Prostate gland (tissue), 2 donors: ENCODE measurements at regions of chr9 and their contacts with region 1.

Region 1: DNA sequence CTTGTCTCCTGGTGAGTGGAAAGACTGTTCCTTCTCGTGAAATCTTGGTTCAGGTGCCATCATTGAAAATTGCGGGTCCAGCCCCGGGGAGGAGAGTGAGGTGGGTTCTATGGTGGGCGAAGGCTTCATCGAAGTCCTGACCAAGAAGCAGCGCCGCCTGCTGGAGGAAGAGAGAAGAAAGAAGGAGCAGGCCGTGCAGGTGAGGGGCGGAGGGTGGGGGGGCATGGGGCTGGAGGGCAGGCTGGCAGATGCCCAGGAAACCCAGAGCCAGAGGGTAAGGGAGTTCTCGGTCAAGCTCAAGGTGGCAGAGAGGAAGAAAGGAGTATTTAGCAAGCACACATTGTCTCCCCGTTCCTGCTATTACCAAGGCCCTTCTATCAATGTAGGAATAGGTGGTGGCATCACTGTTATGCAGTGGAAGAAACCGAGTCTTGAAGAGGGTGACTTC is 24.3 kb upstream of the POMT1 start:
- DNase-seq: no peak
- H3K4me3 ChIP-seq: no peak overlapping the region
- H3K27ac ChIP-seq: no peak overlapping the region
- H3K4me1 ChIP-seq: peaks cover 17% of the 10 kb centered on the region
- H3K27me3 ChIP-seq: no peaks in the 10 kb centered on the region
- CTCF ChIP-seq: peak; percentile 39 to 63 (median 46)
- POLR2A ChIP-seq: no peak

Region 2: GRCh38 chr9:131349881-131350563 is 128.4 kb before region 1 on chr9:
- intact Hi-C with region 1: loop called (anchors 10 kb)
- DNase-seq: peak; percentile 91
- H3K4me3 ChIP-seq: peak overlapping the region; percentile 8 to 27
- H3K27ac ChIP-seq: peak overlapping the region in 1 of 2 donors; percentile 33
- H3K4me1 ChIP-seq: no peaks in the 10 kb centered on the region
- H3K27me3 ChIP-seq: no peaks in the 10 kb centered on the region
- CTCF ChIP-seq: peak; percentile 61 to 93 (median 88)
- POLR2A ChIP-seq: no peak

Region 3: DNA sequence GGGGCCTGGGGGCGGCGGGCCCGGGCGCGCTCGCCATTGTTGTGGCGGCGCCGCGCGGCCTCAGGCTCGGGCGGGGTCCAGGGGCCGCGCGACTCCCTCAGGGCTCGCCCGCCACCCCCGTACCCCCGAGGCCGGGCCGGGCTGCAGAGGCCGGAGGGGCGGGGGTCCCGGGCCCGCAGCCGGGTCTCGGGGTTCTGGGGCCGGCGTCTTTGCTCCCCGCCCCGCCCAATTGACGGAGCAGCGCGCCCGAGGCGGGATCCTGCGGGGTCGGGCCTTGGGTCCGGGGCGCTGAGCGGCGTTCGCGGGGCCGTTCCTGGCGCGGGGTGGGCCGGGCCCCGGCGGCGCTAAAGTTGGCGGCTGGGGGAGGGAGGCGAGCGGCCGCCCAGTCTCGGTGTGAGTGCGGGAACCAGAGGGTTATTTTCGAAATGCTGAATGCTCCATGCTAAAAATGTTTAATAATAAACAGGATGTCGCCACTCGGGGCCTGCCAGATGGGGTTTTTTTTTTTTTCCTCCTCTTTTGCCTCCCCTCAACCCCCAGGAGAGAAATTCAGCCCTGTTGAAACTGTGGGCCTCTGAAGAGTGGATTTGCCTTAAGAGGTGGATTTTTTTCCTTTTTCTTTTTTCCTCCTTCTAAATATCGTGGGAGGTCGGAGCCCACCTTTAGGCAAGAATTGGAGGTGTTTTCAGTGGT is 83.8 kb before region 1 on chr9:
- intact Hi-C with region 1: loop called (anchors 5 kb)
- DNase-seq: no peak
- H3K4me3 ChIP-seq: peak overlapping the region; percentile 75 to 79
- H3K27ac ChIP-seq: peak overlapping the region; percentile 94 to 97
- H3K4me1 ChIP-seq: peaks cover 28% of the 10 kb centered on the region
- H3K27me3 ChIP-seq: no peaks in the 10 kb centered on the region
- CTCF ChIP-seq: no peak
- POLR2A ChIP-seq: no peak

Region 4: DNA sequence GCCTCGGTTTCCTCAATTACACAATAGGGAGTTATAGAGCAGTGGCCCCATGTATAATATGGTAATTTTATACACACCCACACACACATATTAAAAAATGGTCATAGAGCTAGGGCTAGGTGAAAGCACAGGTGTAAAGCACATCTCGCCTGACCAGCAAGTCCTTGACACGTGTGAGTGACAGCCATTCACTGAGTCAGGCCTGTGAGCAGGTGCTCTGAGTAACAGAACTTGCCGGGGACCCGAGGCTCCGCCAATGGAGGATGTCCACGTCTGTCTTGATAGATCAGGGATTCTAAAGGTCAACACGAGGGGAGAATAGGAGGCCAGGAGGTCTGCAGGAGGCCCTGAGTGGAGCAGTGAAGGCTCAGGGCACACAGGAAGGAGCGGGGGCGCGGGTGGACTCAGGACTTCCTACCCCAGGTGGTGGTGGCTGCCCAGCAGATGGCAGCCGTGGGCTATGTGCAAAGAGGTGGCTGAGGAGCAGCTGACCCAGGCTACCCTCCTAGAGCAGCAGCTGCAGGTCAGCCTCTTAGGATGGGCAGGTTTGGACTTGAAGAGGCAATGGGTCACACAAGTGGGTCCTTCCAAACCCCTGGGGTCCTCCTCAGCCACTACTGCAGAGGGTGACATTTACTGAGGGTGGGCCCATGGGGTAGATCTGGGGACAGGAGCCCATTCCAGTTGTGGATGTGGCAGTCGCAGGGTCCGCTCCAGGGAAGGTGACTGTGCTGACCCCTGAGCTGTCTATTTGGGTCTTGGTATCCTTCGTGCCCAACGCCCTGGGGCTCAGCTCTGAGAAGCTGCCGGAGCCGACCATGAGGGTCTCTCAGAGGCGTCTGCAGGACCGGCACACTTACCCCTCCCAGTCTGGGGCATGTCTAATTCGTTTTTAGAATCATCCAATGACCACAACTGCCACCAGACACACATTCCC is 112.7 kb after region 1 on chr9:
- intact Hi-C with region 1: no loop called
- DNase-seq: peak; percentile 75
- H3K4me3 ChIP-seq: no peak overlapping the region
- H3K27ac ChIP-seq: no peak overlapping the region
- H3K4me1 ChIP-seq: no peaks in the 10 kb centered on the region
- H3K27me3 ChIP-seq: no peaks in the 10 kb centered on the region
- CTCF ChIP-seq: peak; percentile 59 to 96 (median 90)
- POLR2A ChIP-seq: no peak

Region 5: DNA sequence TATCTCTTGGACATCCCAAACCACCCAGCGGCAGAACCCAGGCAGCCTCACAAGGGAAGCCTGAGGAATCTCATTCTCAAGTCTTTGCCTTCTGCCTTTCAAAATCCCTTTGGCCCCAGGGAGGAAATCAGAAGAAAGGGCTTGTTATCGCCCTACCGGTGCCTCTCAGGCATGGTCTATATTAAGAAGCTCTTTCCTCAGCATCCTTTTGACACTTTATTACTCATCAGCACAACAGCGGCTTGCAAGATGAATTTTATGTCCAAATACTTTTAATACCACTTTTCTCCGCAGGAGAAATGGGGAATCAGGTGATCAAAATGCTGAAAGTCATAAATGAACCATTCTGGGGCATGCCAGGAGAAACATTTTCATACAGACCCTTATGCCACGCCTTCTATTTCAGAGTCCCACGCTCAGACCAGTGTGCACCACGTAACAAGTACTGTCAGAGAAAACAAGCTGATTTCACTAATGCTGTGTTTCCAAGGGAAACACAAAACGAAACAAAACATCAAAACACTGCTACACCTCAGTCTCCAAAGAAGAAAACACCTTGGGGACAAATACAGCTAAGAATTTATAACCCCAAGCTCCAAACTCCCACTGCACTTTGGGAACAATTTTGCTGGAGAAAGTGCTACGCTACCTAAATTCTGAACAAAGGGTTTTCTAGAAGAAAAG is 231.5 kb after region 1 on chr9:
- intact Hi-C with region 1: no loop called
- DNase-seq: no peak
- H3K4me3 ChIP-seq: no peak overlapping the region
- H3K27ac ChIP-seq: peak overlapping the region in 1 of 2 donors; percentile 36
- H3K4me1 ChIP-seq: no peaks in the 10 kb centered on the region
- H3K27me3 ChIP-seq: no peaks in the 10 kb centered on the region
- CTCF ChIP-seq: no peak
- POLR2A ChIP-seq: no peak